GM12878 (cell line): ENCODE measurements at regions of chr2 and their contacts with region 1.

Region 1: GRCh38 chr2:154974041-154974440 is 275.5 kb downstream of the KCNJ3 start:
- DNase-seq: no peak
- ATAC-seq: peak; percentile 56; the same call in 2 of the 3 replicates
- H3K4me3 ChIP-seq: no peak overlapping the region
- H3K27ac ChIP-seq: no peak overlapping the region
- H3K4me1 ChIP-seq: no peaks in the 10 kb centered on the region
- H3K27me3 ChIP-seq: no peaks in the 10 kb centered on the region
- CTCF ChIP-seq: no peak
- EP300 ChIP-seq: no peak
- POLR2A ChIP-seq: no peak
- RAD21 ChIP-seq: no peak

Region 2: GRCh38 chr2:154960802-154961583 is 13.0 kb before region 1 on chr2:
- CTCF ChIA-PET with region 1: interaction called, 14 read pairs
- POLR2A ChIA-PET with region 1: no interaction called
- RAD21 ChIA-PET with region 1: interaction called, 3 read pairs
- SMC1A ChIA-PET with region 1: interaction called, 9 read pairs
- in situ Hi-C with region 1: no loop called
- intact Hi-C with region 1: loop called (anchors 1 kb)
- DNase-seq: peak; percentile 36
- ATAC-seq: peak; percentile 77
- H3K4me3 ChIP-seq: no peak overlapping the region
- H3K27ac ChIP-seq: no peak overlapping the region
- H3K4me1 ChIP-seq: no peaks in the 10 kb centered on the region
- H3K27me3 ChIP-seq: no peaks in the 10 kb centered on the region
- CTCF ChIP-seq: no peak
- EP300 ChIP-seq: 0 out of 4 replicates have a peak, but pooled peaks of 1 of the 2 experiments have one; percentile 12
- POLR2A ChIP-seq: no peak
- RAD21 ChIP-seq: no peak

Region 3: GRCh38 chr2:155223781-155224406 is 249.9 kb after region 1 on chr2:
- CTCF ChIA-PET with region 1: no interaction called
- POLR2A ChIA-PET with region 1: no interaction called
- RAD21 ChIA-PET with region 1: no interaction called
- SMC1A ChIA-PET with region 1: interaction called, 3 read pairs
- in situ Hi-C with region 1: no loop called
- intact Hi-C with region 1: loop called (anchors 10 kb)
- DNase-seq: no peak
- ATAC-seq: peak; percentile 80
- H3K4me3 ChIP-seq: no peak overlapping the region
- H3K27ac ChIP-seq: no peak overlapping the region
- H3K4me1 ChIP-seq: peaks cover 1% of the 10 kb centered on the region; the same call in 1 of the 2 replicates
- H3K27me3 ChIP-seq: no peaks in the 10 kb centered on the region
- CTCF ChIP-seq: peak; percentile 33 to 61 (median 52); a peak in 5 of 6 replicates
- EP300 ChIP-seq: no peak
- POLR2A ChIP-seq: no peak
- RAD21 ChIP-seq: peak; percentile 87